Activated CD8-positive, alpha-beta memory T cell treated with anti-CD3 and anti-CD28 coated beads, Interleukin-2, amount 10 ng/mL, durations not matched to agents 7 days and 5 days (primary cell): ENCODE measurements at regions of chr14 and their contacts with region 1.

Region 1: DNA sequence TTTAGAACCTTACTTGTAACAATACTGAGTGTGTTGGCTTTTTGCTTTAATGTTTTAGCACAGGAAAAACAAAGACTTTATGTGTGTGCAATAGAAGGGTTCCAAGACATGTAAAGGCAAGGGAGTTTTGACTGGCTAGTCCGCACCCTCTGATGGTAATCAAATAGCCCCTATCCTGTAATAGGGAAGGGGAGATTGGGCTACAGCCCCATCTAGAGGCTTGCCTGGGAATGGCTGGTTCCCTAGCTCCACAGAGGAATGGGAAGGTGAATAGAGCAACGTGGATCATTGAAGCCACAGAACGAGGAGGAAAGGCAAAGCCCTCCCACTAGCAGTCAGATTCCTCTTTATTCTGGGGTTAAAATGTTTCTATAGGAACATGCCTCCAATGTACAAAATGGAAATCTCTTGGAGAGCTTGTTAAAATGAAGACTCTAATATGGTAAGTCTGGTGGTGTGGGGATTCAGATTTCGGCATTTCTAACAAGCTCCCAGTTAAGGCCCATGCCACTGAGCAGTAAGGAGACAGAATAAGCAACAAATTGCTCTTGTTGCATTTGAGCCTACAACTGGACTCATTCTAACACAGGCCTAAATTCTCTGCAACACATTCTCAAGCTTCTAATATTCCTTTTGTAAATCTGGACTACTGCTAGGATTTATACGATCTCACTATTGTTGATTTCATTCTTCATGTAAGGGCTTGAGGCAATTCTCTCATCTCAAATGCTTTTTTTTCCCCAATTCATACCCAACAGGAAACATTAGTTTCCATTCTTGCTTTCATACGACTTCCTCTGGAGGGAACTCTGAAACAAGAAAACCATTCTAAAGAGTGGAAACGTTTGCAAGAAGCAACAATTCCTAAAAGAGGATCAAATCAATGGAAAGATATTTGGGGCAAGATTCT is 57.1 kb downstream of the NIN start:
- DNase-seq: no peak
- ATAC-seq: peak; percentile 53
- H3K4me3 Mint-ChIP-seq: no peak overlapping the region
- H3K27ac Mint-ChIP-seq: no peak overlapping the region
- H3K4me1 Mint-ChIP-seq: peaks cover 25% of the 10 kb centered on the region
- H3K27me3 Mint-ChIP-seq: no peaks in the 10 kb centered on the region

Region 2: DNA sequence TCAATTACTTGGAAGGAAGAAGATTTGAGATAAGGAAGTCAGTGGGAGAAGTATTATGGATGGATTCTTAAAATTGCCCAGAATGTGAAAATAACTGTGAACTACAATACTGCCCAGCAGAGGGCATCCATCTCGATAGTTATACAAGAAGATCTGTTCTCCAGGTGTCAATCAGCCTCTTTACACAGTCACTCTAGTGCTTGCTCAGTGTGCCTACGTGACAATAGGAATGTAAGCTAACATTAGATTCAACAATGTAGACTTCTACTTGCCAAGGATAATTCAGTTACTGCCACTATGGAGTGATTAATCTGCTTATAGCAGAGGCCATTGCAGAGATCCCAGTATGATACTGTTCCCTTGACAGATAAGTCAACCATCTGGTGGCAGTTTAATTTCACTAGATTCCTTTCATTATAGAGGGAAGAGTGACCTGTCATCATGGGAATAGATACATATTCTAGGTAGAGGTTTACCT is 230.9 kb before region 1 on chr14:
- CTCF ChIA-PET with region 1: interaction called, 14 read pairs
- DNase-seq: peak; percentile 46
- ATAC-seq: peak; percentile 76
- H3K4me3 Mint-ChIP-seq: no peak overlapping the region
- H3K27ac Mint-ChIP-seq: no peak overlapping the region
- H3K4me1 Mint-ChIP-seq: peaks cover 11% of the 10 kb centered on the region
- H3K27me3 Mint-ChIP-seq: peaks cover 7% of the 10 kb centered on the region

Region 3: DNA sequence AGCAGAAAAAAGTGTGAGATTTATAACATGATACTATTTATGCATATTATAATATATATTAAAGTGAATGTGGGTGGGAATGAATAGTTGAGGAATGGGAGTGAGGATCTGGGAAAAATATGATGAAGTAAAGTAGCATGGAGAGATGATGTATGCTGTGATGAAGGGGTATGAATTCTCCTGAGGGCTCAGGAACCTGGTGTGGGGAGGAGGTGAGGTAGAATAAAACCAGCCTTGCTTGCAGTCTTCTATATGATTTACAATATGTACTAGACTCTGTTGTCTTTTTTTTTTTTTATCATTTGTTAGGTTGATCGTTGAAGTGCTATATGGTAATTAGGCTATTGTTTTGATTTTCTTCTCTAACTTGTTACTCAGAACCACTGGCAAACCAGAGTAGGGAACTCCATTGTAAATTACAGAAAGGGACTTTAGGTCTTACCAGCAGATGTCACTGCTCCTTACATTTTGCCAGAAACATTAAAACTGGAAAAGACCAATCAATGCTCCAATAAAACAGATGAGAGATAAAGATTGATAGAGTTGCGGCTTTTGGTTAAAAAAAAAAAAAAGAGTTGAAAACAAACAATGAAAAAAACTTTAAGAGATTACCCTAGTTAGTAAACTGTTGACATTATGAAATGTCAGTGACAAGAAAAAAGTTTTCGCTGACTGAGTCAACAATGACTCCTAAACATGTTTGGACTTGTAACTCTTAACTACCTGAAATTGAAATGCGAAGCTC is 174.0 kb before region 1 on chr14:
- CTCF ChIA-PET with region 1: interaction called, 17 read pairs
- DNase-seq: no peak
- ATAC-seq: no peak
- H3K4me3 Mint-ChIP-seq: no peak overlapping the region
- H3K27ac Mint-ChIP-seq: no peak overlapping the region
- H3K4me1 Mint-ChIP-seq: peaks cover 3% of the 10 kb centered on the region
- H3K27me3 Mint-ChIP-seq: no peaks in the 10 kb centered on the region

Region 4: GRCh38 chr14:50619556-50620141 is 154.2 kb before region 1 on chr14:
- CTCF ChIA-PET with region 1: interaction called, 12 read pairs
- DNase-seq: no peak
- ATAC-seq: peak; percentile 55
- H3K4me3 Mint-ChIP-seq: no peak overlapping the region
- H3K27ac Mint-ChIP-seq: no peak overlapping the region
- H3K4me1 Mint-ChIP-seq: peaks cover 2% of the 10 kb centered on the region
- H3K27me3 Mint-ChIP-seq: peaks cover 2% of the 10 kb centered on the region

Region 5: DNA sequence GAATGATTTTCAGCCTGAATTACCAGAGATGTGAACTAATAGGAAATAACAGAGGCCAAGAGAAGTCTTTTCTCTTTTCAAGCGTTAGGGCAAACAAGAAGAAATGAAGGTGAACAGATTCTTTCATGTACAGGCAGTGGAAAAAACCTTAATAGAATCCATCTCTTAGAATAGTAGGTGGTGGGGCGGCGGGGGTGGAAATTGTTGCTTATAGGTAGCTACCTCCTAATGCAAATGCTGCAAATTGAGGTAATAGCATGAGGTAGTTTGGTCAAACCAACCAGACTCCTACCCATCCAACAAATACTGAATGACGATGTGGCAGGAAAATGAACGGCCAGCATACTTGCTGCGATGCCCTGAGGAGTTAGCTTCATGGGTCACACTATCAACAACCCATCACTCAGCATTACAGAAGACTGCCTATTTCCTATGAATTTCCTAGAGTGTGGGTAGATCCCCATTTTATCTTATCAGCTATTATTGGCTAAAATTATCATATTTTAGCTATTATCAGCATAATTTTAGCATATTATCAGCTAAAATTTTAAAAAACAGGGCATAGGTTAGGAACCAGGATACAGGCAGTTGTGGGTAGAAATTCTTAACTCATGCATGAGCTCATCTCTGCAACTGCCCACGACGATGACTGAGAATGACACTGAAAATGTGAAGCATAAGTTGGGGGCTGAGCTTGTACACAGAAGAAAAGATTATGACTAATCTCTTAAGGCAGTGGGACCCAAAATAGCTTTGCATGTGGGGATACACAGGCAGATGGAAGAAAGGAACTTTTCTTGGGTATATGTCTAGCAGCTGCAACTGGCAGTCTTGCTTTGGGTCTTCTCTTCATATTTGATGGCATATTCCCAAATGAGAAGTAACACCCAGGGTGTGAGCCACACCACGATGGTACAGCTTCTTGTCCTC is 11.6 kb before region 1 on chr14:
- CTCF ChIA-PET with region 1: interaction called, 88 read pairs
- DNase-seq: peak; percentile 63
- ATAC-seq: peak; percentile 91
- H3K4me3 Mint-ChIP-seq: no peak overlapping the region
- H3K27ac Mint-ChIP-seq: peak overlapping the region; percentile 20
- H3K4me1 Mint-ChIP-seq: peaks cover 24% of the 10 kb centered on the region
- H3K27me3 Mint-ChIP-seq: no peaks in the 10 kb centered on the region

Region 6: GRCh38 chr14:50785457-50786063 is 11.7 kb after region 1 on chr14:
- CTCF ChIA-PET with region 1: interaction called, 10 read pairs
- DNase-seq: no peak
- ATAC-seq: peak; percentile 62
- H3K4me3 Mint-ChIP-seq: peak overlapping the region; percentile 29
- H3K27ac Mint-ChIP-seq: peak overlapping the region; percentile 61
- H3K4me1 Mint-ChIP-seq: peaks cover 67% of the 10 kb centered on the region
- H3K27me3 Mint-ChIP-seq: no peaks in the 10 kb centered on the region

Region 7: DNA sequence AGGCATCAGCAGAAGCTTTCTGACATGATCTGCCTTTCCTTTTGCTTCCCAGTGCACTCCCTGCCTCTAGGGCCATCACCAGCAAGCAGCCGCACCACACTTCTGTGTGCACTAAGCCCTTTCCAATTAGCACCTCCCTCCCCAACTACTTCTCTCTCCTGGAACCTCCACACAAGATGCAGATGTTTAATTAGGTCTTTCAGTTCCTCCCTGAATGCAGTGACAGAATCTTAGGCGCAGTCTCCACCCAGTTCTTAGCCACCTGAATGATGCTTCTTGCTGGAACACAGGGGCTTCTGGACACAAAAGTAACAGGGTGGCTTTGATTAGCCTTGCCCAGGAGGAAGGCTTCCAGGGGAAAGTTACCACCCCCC is 24.1 kb after region 1 on chr14:
- CTCF ChIA-PET with region 1: interaction called, 19 read pairs
- DNase-seq: no peak
- ATAC-seq: no peak
- H3K4me3 Mint-ChIP-seq: no peak overlapping the region
- H3K27ac Mint-ChIP-seq: no peak overlapping the region
- H3K4me1 Mint-ChIP-seq: peaks cover 9% of the 10 kb centered on the region
- H3K27me3 Mint-ChIP-seq: no peaks in the 10 kb centered on the region

Region 8: GRCh38 chr14:50937325-50937724 is 163.4 kb after region 1 on chr14:
- CTCF ChIA-PET with region 1: no interaction called
- DNase-seq: no peak
- ATAC-seq: no peak
- H3K4me3 Mint-ChIP-seq: no peak overlapping the region
- H3K27ac Mint-ChIP-seq: no peak overlapping the region
- H3K4me1 Mint-ChIP-seq: no peaks in the 10 kb centered on the region
- H3K27me3 Mint-ChIP-seq: peaks cover 41% of the 10 kb centered on the region